ENCODE measurements at regions of chr17 and their contacts with region 1.

Region 1: DNA sequence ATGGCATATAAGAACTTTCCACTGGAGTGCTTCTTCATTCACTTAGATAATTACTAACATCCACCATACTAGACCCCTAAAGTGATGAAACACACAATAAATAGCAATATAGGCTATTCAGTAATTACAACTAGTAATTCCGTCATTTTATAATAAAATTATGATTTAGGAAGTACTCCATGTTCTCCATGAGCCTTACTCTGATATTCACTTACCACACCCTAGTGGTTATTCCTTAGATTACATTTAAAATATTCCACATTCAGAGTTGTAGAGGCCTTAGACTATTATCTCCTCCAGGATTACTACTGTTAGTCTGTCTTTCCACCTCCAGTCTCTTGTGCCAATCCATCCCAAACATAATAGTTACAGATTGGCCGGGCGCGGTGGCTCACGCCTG is 62.4 kb downstream of the STH start:
- DNase-seq: no peak
- ATAC-seq: no peak
- H3K4me3 ChIP-seq: no peak overlapping the region
- H3K27ac ChIP-seq: peak overlapping the region in 3 of 4 donors; percentile 16 to 41 (median 20)
- H3K4me1 ChIP-seq: peaks cover 32 to 38% of the 10 kb centered on the region in 2 donors
- H3K27me3 ChIP-seq: no peaks in the 10 kb centered on the region
- CTCF ChIP-seq: peak in 1 of 5 experiments; percentile 31
- POLR2A ChIP-seq: no peak

Region 2: DNA sequence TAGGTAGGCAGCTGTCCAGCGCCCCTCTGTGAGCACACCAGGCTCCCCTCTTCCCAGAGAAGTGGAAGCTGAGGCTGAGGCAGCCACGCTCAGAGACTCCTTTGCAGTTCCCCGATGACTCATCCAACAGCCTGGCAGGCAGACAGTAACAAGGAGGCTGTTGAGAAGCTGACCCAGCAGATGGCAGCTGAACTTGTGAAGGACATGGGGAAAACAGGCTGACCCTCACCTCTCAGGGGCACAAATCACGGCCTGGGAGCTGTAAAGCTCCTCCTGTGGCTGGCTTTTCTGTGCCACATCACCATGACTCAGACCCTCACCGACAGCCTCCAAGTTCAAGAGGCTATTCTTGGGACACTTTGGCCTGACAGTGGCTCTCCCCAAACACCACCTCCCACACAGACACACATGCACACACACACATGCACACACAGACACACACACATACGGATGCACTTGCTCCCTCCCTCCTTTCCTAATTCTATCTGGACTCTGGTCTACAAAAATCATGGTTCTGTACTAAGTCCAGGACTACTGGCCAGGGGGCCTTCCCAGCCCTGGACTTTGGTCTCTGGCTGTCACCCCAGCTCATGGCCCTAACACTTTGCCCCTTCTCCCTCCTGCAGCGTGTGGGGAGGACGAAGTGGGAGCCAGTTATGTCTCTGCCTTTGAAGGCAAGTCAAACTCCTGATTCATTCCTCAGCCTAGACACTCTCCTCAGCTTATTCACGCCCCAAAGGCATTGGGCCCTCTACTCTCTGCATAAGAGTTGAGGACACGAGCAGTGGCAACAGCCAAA is 767.8 kb before region 1 on chr17:
- in situ Hi-C with region 1: no loop called
- intact Hi-C with region 1: no loop called
- DNase-seq: peak; percentile 97 to 99
- ATAC-seq: peak; percentile 79 to 81
- H3K4me3 ChIP-seq: peak overlapping the region in 1 of 4 donors; percentile 11
- H3K27ac ChIP-seq: peak overlapping the region; percentile 88 to 98 (median 94)
- H3K4me1 ChIP-seq: peaks cover 99 to 100% of the 10 kb centered on the region in 2 donors
- H3K27me3 ChIP-seq: no peaks in the 10 kb centered on the region
- CTCF ChIP-seq: no peak
- POLR2A ChIP-seq: peak; percentile 24 to 49

Region 3: DNA sequence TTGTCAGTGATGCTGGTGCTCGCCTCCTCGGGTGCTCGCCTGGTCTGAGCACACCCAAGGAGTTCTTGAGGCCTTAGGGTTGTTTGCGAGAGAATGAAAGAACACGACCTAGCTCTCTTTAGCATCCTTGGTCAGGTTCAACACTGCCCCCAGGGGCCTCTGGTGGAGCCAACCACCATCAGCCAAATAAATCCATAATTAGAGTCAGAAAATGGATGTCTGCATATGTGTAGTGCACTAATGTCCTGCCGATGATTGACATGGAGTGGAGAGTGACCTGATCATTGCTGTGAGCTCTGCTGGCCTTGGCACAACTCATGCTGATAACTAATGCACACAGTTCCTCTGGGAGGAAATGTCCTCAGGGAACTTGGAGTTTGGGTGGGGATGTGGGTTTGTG is 70.5 kb before region 1 on chr17:
- in situ Hi-C with region 1: no loop called
- intact Hi-C with region 1: no loop called
- DNase-seq: no peak
- ATAC-seq: no peak
- H3K4me3 ChIP-seq: no peak overlapping the region
- H3K27ac ChIP-seq: no peak overlapping the region
- H3K4me1 ChIP-seq: no peaks in the 10 kb centered on the region
- H3K27me3 ChIP-seq: no peaks in the 10 kb centered on the region
- CTCF ChIP-seq: no peak
- POLR2A ChIP-seq: no peak

Region 4: GRCh38 chr17:46108550-46109110 is 47.2 kb after region 1 on chr17:
- in situ Hi-C with region 1: no loop called
- intact Hi-C with region 1: loop called (anchors 5 kb)
- DNase-seq: peak in 1 of 2 donors; percentile 54
- ATAC-seq: peak; percentile 78 to 89
- H3K4me3 ChIP-seq: no peak overlapping the region
- H3K27ac ChIP-seq: peak overlapping the region; percentile 56 to 76 (median 62)
- H3K4me1 ChIP-seq: peaks cover 59 to 65% of the 10 kb centered on the region in 2 donors
- H3K27me3 ChIP-seq: no peaks in the 10 kb centered on the region
- CTCF ChIP-seq: no peak
- POLR2A ChIP-seq: no peak

Measured in gastrocnemius medialis (tissue), 4 donors.